ENCODE measurements at regions of chr19 and their contacts with region 1.

Region 1: DNA sequence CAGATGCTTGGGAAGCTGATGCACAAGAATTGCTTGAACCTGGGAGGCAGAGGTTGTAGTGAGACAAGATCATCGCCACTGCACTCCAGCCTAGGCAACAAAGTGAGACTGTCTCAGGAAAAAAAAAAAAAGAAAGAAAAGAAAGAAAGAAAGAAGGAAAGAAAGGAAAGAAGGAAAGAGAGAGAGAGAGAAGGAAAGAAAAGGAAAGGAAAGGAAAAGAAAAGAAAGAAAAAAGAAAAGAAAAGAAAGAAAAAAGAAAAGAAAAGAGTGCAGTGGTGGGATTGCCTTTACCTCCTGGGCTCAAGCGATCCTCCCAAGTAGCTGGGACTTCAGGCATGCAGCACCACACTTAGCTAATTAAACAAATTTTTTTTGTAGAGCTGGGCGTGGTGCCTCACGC is 12.9 kb downstream of the OLFM2 start:
- DNase-seq: no peak
- ATAC-seq: no peak
- H3K4me3 ChIP-seq: no peak overlapping the region
- H3K27ac ChIP-seq: no peak overlapping the region
- H3K4me1 ChIP-seq: no peaks in the 10 kb centered on the region
- H3K27me3 ChIP-seq: no peaks in the 10 kb centered on the region
- CTCF ChIP-seq: no peak
- POLR2A ChIP-seq: no peak

Region 2: GRCh38 chr19:10245189-10245939 is 321.9 kb after region 1 on chr19:
- in situ Hi-C with region 1: loop called in 3 of 4 experiments (anchors 10 to 25 kb)
- intact Hi-C with region 1: no loop called
- DNase-seq: no peak
- ATAC-seq: no peak
- H3K4me3 ChIP-seq: no peak overlapping the region
- H3K27ac ChIP-seq: no peak overlapping the region
- H3K4me1 ChIP-seq: no peaks in the 10 kb centered on the region
- H3K27me3 ChIP-seq: no peaks in the 10 kb centered on the region
- CTCF ChIP-seq: no peak
- POLR2A ChIP-seq: no peak